IMR-90 (cell line): ENCODE measurements at regions of chr21 and their contacts with region 1.

Region 1: DNA sequence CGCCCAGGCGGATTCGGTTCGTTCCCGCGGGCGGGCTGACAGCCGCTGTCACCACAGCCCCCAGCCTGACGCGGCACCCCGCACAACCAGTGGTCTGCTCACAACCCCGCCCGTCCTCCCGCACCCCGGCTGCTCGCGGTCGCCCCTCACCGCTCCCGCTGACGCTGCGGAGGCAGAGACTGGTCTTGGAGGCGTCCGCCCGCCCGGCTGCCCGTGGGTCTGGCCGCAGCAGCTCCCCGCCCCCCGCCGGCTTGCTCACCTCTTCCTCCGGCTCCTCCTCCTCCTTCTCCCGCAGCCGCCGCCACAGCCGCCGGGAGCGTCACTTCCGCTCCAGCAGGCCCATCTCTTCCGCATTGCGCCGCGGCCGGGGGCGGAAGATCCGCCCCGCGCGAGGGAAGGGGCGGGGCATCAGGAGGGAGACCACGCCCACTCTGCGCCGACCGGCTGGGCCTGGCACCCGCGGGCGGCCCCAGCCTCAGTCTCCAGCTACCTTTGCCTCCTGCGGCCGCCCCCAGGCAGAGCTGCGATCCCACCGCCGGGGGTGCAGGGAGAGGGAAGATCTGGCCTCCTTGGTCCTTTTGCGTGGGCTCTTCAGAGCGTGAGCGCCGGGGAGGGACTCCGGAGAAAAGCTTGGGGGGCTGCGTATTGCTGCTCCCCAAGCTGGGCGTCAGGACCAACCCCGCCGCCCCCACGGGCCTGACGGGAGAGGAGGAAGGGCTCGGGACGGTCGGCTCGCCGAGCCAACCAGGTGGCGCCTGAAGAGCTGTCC is at the start of gene SYNJ1:
- DNase-seq: peak; percentile 91
- ATAC-seq: peak; percentile 92
- H3K4me3 ChIP-seq: peak within 1 kb of the TSS; percentile 74
- H3K27ac ChIP-seq: peak within 1 kb of the TSS; percentile 74
- H3K4me1 ChIP-seq: peaks cover 3% of the 10 kb centered on the region; the same call in 1 of the 2 replicates
- H3K27me3 ChIP-seq: no peaks in the 10 kb centered on the region
- CTCF ChIP-seq: no peak
- POLR2A ChIP-seq: peak; percentile 82
- RAD21 ChIP-seq: no peak
- total RNA-seq, gene SYNJ1: 3.6 and 8.3 TPM in 2 replicates

Region 2: GRCh38 chr21:32392880-32393676 is 334.8 kb before region 1 on chr21 and contains the start of gene URB1:
- CTCF ChIA-PET with region 1: no interaction called
- POLR2A ChIA-PET with region 1: no interaction called
- dilution Hi-C with region 1: no loop called
- in situ Hi-C with region 1: loop called (anchors 25 kb)
- intact Hi-C with region 1: no loop called
- DNase-seq: peak; percentile 65
- ATAC-seq: peak; percentile 97
- H3K4me3 ChIP-seq: peak within 1 kb of the TSS; percentile 95
- H3K27ac ChIP-seq: peak within 1 kb of the TSS; percentile 67
- H3K4me1 ChIP-seq: peaks cover 8% of the 10 kb centered on the region
- H3K27me3 ChIP-seq: no peaks in the 10 kb centered on the region
- CTCF ChIP-seq: no peak
- POLR2A ChIP-seq: no peak; the same call in 1 of the 2 replicates
- RAD21 ChIP-seq: no peak
- total RNA-seq, gene URB1: 12.7 and 14.2 TPM in 2 replicates

Region 3: DNA sequence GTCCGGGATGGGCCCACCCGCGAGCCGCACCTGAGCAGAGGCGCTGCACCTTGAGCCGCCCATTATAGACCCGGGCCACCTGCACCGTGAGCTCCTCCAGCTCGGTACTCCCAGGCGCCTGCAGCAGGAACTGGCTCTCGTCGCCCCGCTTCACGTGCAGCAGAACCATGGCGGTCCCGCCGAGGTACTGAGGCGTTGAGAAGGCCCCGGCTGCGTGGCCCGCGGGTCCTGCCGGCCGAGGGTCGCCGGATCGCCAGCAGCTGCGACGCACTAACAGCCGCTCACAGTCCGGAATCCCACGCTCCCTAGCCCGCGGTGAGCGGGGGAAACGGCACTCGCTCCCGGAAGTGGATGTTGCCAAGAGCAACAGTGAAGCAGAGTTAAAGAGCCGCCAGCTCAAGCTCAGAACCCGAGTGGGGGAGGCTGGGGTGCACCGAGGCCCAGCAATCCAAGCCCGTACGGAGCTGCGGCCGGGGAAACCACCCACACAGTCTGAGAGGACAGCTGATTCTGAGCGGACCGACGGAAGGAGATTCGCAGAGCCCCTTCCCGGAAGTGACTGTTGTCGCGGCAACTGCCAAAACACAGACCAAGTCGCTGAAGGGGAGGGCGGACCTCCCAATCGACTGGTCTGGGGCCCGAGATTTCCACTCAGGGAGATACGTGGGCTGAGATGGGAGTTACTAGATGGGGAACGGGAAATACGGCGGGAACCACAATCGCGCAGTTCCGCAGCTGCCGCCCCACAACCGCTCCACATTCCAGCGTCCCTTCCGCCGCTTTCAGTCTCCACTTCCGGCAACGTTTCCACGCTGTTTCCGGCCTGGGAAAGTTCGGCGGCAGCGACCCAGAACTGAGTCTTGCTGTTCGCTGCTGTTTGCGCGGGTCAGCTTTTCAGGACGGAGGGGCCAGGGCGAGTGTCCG is 115.5 kb before region 1 on chr21 and contains the start of gene CFAP298:
- CTCF ChIA-PET with region 1: no interaction called
- POLR2A ChIA-PET with region 1: no interaction called
- dilution Hi-C with region 1: no loop called
- in situ Hi-C with region 1: no loop called
- intact Hi-C with region 1: loop called (anchors 2 kb)
- DNase-seq: peak; percentile 95
- ATAC-seq: peak; percentile 97
- H3K4me3 ChIP-seq: peak within 1 kb of the TSS; percentile 80
- H3K27ac ChIP-seq: peak within 1 kb of the TSS; percentile 91
- H3K4me1 ChIP-seq: peaks cover 2% of the 10 kb centered on the region; the same call in 1 of the 2 replicates
- H3K27me3 ChIP-seq: no peaks in the 10 kb centered on the region
- CTCF ChIP-seq: no peak
- POLR2A ChIP-seq: peak; percentile 73
- RAD21 ChIP-seq: no peak
- total RNA-seq, gene CFAP298: 8.1 and 16.1 TPM in 2 replicates

Region 4: GRCh38 chr21:32626621-32627196 is 101.2 kb before region 1 on chr21:
- CTCF ChIA-PET with region 1: no interaction called
- POLR2A ChIA-PET with region 1: no interaction called
- dilution Hi-C with region 1: no loop called
- in situ Hi-C with region 1: no loop called
- intact Hi-C with region 1: loop called (anchors 1 kb)
- DNase-seq: peak; percentile 82
- ATAC-seq: peak; percentile 64
- H3K4me3 ChIP-seq: no peak overlapping the region
- H3K27ac ChIP-seq: no peak overlapping the region
- H3K4me1 ChIP-seq: peaks cover 5% of the 10 kb centered on the region; the same call in 1 of the 2 replicates
- H3K27me3 ChIP-seq: 0 out of 2 replicates have a peak, but pooled peaks cover 2% of the 10 kb centered on the region
- CTCF ChIP-seq: no peak
- POLR2A ChIP-seq: no peak
- RAD21 ChIP-seq: no peak

Region 5: GRCh38 chr21:32653311-32653901 is 74.5 kb before region 1 on chr21:
- CTCF ChIA-PET with region 1: no interaction called
- POLR2A ChIA-PET with region 1: no interaction called
- dilution Hi-C with region 1: no loop called
- in situ Hi-C with region 1: no loop called
- intact Hi-C with region 1: loop called (anchors 5 kb)
- DNase-seq: peak; percentile 10
- ATAC-seq: peak; percentile 35; the same call in 1 of the 2 replicates
- H3K4me3 ChIP-seq: no peak overlapping the region
- H3K27ac ChIP-seq: no peak overlapping the region
- H3K4me1 ChIP-seq: no peaks in the 10 kb centered on the region
- H3K27me3 ChIP-seq: no peaks in the 10 kb centered on the region
- CTCF ChIP-seq: peak; percentile 53
- POLR2A ChIP-seq: no peak
- RAD21 ChIP-seq: peak; percentile 60

Region 6: GRCh38 chr21:32674731-32675130 is 53.1 kb before region 1 on chr21:
- CTCF ChIA-PET with region 1: no interaction called
- POLR2A ChIA-PET with region 1: no interaction called
- dilution Hi-C with region 1: no loop called
- in situ Hi-C with region 1: no loop called
- intact Hi-C with region 1: loop called (anchors 5 kb)
- DNase-seq: no peak
- ATAC-seq: no peak
- H3K4me3 ChIP-seq: no peak overlapping the region
- H3K27ac ChIP-seq: no peak overlapping the region
- H3K4me1 ChIP-seq: no peaks in the 10 kb centered on the region
- H3K27me3 ChIP-seq: no peaks in the 10 kb centered on the region
- CTCF ChIP-seq: no peak
- POLR2A ChIP-seq: no peak
- RAD21 ChIP-seq: no peak

Region 7: GRCh38 chr21:32770871-32771523 is 43.1 kb after region 1 on chr21:
- CTCF ChIA-PET with region 1: interaction called, 3 read pairs
- POLR2A ChIA-PET with region 1: no interaction called
- dilution Hi-C with region 1: no loop called
- in situ Hi-C with region 1: no loop called
- intact Hi-C with region 1: loop called (anchors 2 kb)
- DNase-seq: peak; percentile 56
- ATAC-seq: peak; percentile 64
- H3K4me3 ChIP-seq: peak overlapping the region; percentile 98
- H3K27ac ChIP-seq: peak overlapping the region; percentile 88
- H3K4me1 ChIP-seq: no peaks in the 10 kb centered on the region
- H3K27me3 ChIP-seq: no peaks in the 10 kb centered on the region
- CTCF ChIP-seq: no peak
- POLR2A ChIP-seq: no peak
- RAD21 ChIP-seq: no peak

Region 8: DNA sequence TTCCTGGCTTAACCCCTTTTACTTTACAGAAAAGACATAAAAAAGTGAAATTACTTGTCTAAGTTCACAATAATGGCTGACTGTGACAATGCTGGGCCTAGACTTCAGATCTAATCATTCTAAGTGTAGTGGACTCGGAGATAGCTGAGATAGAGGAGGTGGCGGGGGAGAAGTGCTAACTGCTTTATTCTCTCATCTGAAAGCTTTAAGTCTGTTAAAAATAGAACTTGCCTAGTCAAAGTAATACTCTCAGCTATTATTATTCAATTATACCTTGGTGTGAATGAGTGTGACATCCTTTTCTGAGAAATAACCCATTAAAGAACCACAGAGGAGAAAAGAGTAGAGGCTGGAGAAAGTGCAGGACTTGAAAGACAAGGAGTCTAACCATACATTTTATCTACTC is 201.8 kb after region 1 on chr21:
- CTCF ChIA-PET with region 1: no interaction called
- POLR2A ChIA-PET with region 1: no interaction called
- dilution Hi-C with region 1: no loop called
- in situ Hi-C with region 1: no loop called
- intact Hi-C with region 1: no loop called
- DNase-seq: no peak
- ATAC-seq: no peak
- H3K4me3 ChIP-seq: no peak overlapping the region
- H3K27ac ChIP-seq: no peak overlapping the region
- H3K4me1 ChIP-seq: no peaks in the 10 kb centered on the region
- H3K27me3 ChIP-seq: peaks cover 6% of the 10 kb centered on the region
- CTCF ChIP-seq: no peak
- POLR2A ChIP-seq: no peak
- RAD21 ChIP-seq: no peak